ENCODE measurements at regions of chr12 and their contacts with region 1.

Region 1: DNA sequence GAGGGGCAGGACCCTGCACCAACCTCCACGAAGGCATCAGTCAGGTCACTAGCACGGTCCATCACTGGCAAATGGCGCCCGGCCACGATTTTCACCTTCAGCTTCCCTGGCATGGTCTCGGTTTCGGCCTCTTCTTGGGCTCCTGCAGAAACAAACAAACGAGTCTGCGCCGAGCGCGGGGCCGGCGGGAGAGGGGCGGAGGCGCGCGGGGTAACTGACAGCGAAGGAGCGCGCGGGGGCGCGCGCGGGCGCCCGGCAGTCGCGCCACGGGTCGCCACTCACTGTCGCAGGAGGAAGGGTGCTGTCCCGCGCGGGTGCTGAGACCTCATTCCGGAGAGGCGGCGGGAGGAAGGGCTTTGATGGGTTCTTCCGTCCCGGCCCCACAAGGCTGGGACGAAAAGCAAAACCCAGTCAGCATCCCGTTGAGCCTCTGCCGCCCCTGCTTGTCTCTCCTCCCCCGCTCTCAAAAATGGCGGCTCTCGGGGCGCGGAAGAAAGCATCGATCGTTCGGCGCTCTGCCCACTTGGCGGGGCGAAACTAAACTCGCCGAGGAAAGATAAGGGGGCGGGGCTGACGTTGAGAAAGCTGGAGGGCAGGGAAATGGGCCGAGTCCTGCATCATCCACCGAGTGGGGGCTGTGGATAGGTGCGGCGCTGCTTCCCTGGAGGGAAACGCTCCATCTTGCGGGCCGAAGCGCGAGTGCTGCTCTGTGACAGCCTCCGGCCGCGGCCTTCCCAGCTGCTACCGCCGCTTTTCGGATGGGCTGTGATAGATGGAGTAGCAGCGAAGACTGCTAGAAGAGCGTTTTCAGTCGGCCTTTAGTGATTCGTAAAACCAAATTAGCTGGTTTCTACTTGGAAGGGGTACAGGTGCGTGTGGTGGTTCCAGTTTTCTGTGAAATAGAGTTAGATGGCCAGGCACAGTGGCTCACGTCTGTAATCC is at the start of gene C2CD5:
- DNase-seq: peak; percentile 98
- ATAC-seq: peak; percentile 87
- H3K4me3 ChIP-seq: peak within 1 kb of the TSS; percentile 75 to 86 (median 84)
- H3K4me3 Mint-ChIP-seq: peak within 1 kb of the TSS; percentile 96
- H3K27ac ChIP-seq: peak within 1 kb of the TSS; percentile 92 to 93
- H3K27ac Mint-ChIP-seq: peak within 1 kb of the TSS; percentile 97
- H3K4me1 ChIP-seq: peaks cover 34 to 39% of the 10 kb centered on the region in 2 donors
- H3K4me1 Mint-ChIP-seq: peaks cover 34% of the 10 kb centered on the region
- H3K27me3 ChIP-seq: no peaks in the 10 kb centered on the region
- H3K27me3 Mint-ChIP-seq: peaks cover 4% of the 10 kb centered on the region
- CTCF ChIP-seq: peak; percentile 33
- total RNA-seq, gene C2CD5: 59.3 and 61.7 TPM in 2 replicates

Region 2: GRCh38 chr12:21438643-21439042 is 1105.7 kb before region 1 on chr12:
- CTCF ChIA-PET with region 1: no interaction called
- POLR2A ChIA-PET with region 1: no interaction called
- intact Hi-C with region 1: loop called (anchors 5 kb)
- DNase-seq: no peak
- ATAC-seq: no peak
- H3K4me3 ChIP-seq: peak overlapping the region in 4 of 5 experiments; percentile 97 to 100 (median 98)
- H3K4me3 Mint-ChIP-seq: peak overlapping the region; percentile 96
- H3K27ac ChIP-seq: peak overlapping the region in 1 of 2 donors; percentile 90
- H3K27ac Mint-ChIP-seq: no peak overlapping the region
- H3K4me1 ChIP-seq: peaks cover 17 to 19% of the 10 kb centered on the region in 2 donors
- H3K4me1 Mint-ChIP-seq: peaks cover 26% of the 10 kb centered on the region
- H3K27me3 ChIP-seq: peaks cover 0 to 2% (median 0%) of the 10 kb centered on the region in 4 experiments
- H3K27me3 Mint-ChIP-seq: peaks cover 5% of the 10 kb centered on the region
- CTCF ChIP-seq: no peak

Region 3: DNA sequence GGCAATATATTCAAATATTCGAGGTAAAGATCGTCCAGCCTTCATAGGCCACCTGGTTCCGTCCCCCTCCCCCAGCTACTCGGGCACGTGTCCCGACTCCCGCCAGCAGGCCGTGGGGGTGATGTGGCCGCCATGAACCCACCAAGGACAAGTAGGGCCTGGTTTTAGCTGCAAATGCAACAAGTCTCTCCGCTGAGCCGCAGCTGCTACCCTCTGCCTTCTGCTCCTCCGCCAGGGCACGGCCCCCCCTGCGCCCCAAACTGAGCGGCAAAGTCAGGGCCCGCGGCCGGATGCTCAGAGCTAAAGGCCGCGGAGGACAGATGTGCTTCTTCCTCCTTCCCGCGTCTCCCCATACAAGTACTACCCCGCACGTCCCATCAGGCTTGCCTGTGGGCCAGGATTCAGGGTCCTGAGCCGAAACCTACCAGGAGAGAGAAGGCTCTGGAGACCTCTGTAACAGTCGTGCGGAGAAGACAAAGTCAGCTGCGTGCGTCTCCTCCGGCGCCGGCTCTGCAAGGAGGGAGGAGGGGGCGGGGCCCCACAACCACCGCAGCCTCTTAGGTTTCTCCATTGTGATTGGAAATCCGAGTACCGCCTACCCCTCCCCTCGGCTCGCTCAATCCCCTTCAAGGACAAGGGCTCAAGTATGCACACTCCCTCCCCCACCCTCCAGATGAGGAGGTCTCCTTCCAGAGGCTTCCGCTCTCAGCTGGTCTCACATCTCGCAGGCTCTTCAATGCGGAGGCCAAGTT is 886.8 kb before region 1 on chr12 and contains the start of gene LDHB:
- CTCF ChIA-PET with region 1: no interaction called
- POLR2A ChIA-PET with region 1: no interaction called
- intact Hi-C with region 1: loop called (anchors 5 kb)
- DNase-seq: peak; percentile 85
- ATAC-seq: peak; percentile 96
- H3K4me3 ChIP-seq: peak within 1 kb of the TSS; percentile 81 to 94 (median 88)
- H3K4me3 Mint-ChIP-seq: peak within 1 kb of the TSS; percentile 93
- H3K27ac ChIP-seq: peak within 1 kb of the TSS; percentile 61 to 68
- H3K27ac Mint-ChIP-seq: peak within 1 kb of the TSS; percentile 97
- H3K4me1 ChIP-seq: peaks cover 8 to 13% of the 10 kb centered on the region in 2 donors
- H3K4me1 Mint-ChIP-seq: peaks cover 30% of the 10 kb centered on the region
- H3K27me3 ChIP-seq: peaks cover 0 to 2% (median 0%) of the 10 kb centered on the region in 4 experiments
- H3K27me3 Mint-ChIP-seq: peaks cover 11% of the 10 kb centered on the region
- CTCF ChIP-seq: no peak
- total RNA-seq, gene LDHB: 161 and 163 TPM in 2 replicates

Region 4: GRCh38 chr12:22164139-22164538 is 380.2 kb before region 1 on chr12:
- CTCF ChIA-PET with region 1: no interaction called
- POLR2A ChIA-PET with region 1: no interaction called
- intact Hi-C with region 1: loop called (anchors 5 kb)
- DNase-seq: peak; percentile 82
- ATAC-seq: peak; percentile 90
- H3K4me3 ChIP-seq: peak overlapping the region in 2 of 5 experiments; percentile 2 to 18
- H3K4me3 Mint-ChIP-seq: peak overlapping the region; percentile 42
- H3K27ac ChIP-seq: peak overlapping the region; percentile 69 to 83
- H3K27ac Mint-ChIP-seq: peak overlapping the region; percentile 64
- H3K4me1 ChIP-seq: peaks cover 27% of the 10 kb centered on the region in 2 donors
- H3K4me1 Mint-ChIP-seq: peaks cover 34% of the 10 kb centered on the region
- H3K27me3 ChIP-seq: no peaks in the 10 kb centered on the region
- H3K27me3 Mint-ChIP-seq: no peaks in the 10 kb centered on the region
- CTCF ChIP-seq: no peak

Region 5: DNA sequence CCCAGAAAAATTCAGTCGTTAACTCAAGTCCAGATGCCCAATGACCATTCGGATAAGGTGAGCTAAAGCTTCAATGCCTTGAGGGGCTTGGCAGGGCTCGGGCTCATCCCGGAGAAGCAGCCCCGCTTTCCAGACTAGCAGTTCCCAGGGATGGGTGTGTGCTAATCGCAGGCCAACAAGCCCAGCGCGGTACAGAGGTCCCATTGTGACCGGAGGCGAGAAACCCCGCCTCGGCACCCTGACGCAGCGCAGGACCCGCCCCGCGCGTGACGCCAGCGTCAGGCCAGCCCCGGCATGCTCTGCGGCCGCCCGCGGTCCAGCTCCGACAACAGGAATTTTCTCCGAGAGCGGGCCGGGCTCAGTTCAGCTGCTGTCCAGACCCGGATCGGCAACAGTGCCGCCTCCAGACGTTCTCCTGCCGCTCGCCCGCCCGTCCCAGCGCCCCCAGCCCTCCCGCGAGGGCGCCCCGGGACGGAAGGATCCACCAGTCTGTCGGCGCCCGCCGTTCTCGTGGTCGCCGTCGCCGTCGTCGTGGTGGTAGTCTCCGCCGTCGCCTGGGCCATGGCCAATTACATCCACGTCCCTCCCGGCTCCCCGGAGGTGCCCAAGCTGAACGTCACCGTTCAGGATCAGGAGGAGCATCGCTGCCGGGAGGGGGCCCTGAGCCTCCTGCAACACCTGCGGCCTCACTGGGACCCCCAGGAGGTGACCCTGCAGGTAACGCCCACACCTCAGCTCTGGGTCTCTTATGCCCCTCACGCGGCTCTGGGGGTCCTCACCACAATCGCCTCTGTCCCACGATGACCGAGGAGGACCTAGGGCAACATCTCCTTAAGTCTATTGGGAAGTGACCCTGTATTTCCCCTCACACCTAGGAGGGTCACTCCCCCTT is 80.8 kb after region 1 on chr12 and contains the start of gene ETNK1:
- CTCF ChIA-PET with region 1: interaction called, 9 read pairs
- POLR2A ChIA-PET with region 1: interaction called, 21 read pairs
- intact Hi-C with region 1: loop called (anchors 1 kb)
- DNase-seq: peak; percentile 88
- ATAC-seq: peak; percentile 99
- H3K4me3 ChIP-seq: peak within 1 kb of the TSS; percentile 75 to 97 (median 90)
- H3K4me3 Mint-ChIP-seq: peak within 1 kb of the TSS; percentile 100
- H3K27ac ChIP-seq: peak within 1 kb of the TSS; percentile 87 to 97
- H3K27ac Mint-ChIP-seq: peak within 1 kb of the TSS; percentile 96
- H3K4me1 ChIP-seq: peaks cover 14 to 36% of the 10 kb centered on the region in 2 donors
- H3K4me1 Mint-ChIP-seq: peaks cover 43% of the 10 kb centered on the region
- H3K27me3 ChIP-seq: peaks cover 0 to 6% (median 0%) of the 10 kb centered on the region in 4 experiments
- H3K27me3 Mint-ChIP-seq: peaks cover 10% of the 10 kb centered on the region
- CTCF ChIP-seq: no peak
- total RNA-seq, gene ETNK1: 91.8 and 106 TPM in 2 replicates

Measured in B cell (primary cell).